ENCODE measurements at regions of chr17 and their contacts with region 1.

Region 1: GRCh38 chr17:21275579-21276263 is 8.8 kb upstream of the MAP2K3 start:
- DNase-seq: peak; percentile 95
- ATAC-seq: peak; percentile 93
- H3K4me3 Mint-ChIP-seq: peak overlapping the region; percentile 67
- H3K27ac Mint-ChIP-seq: peak overlapping the region; percentile 65
- H3K4me1 Mint-ChIP-seq: peaks cover 35% of the 10 kb centered on the region
- H3K27me3 Mint-ChIP-seq: no peaks in the 10 kb centered on the region

Region 2: DNA sequence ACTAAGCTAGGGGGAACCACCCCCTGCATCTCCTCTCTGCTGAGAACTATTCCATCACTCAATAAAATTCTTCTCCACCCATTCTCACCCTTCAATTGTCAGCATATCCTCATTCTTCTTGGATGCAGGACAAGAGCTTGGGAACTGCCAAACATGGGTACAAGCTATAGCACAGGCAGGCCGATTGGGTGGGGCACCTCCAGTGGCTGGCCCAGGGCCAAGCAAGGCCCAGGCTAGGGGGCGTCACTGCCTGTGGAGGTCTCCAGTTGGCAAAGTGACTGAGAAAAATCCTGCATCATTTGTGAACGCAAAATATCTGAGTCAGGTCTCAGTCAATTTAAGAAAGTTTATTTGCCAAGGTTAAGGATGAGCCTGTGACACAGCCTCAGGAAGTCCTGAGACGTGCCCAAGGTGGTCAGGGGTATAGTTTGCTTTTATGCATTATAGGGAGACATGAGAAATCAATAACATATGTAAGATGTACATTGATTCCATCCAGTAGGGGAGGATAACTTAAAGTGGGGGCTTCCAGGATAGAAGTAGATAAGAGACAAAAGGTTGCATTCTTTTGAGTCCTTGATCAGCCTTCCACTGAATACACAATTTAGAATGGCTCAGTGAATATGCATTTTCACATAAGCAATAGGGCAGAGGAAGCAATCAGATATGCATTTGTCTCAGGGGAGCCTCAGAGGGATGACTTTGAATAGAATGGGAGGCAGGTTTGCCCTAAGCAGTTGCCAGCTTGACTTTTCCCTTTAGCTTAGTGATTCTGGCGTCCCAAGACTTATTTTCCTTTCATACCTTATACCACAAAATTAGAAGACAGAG is 170.4 kb before region 1 on chr17:
- CTCF ChIA-PET with region 1: no interaction called
- DNase-seq: no peak
- ATAC-seq: no peak
- H3K4me3 Mint-ChIP-seq: no peak overlapping the region
- H3K27ac Mint-ChIP-seq: no peak overlapping the region
- H3K4me1 Mint-ChIP-seq: no peaks in the 10 kb centered on the region
- H3K27me3 Mint-ChIP-seq: peaks cover 12% of the 10 kb centered on the region

Region 3: DNA sequence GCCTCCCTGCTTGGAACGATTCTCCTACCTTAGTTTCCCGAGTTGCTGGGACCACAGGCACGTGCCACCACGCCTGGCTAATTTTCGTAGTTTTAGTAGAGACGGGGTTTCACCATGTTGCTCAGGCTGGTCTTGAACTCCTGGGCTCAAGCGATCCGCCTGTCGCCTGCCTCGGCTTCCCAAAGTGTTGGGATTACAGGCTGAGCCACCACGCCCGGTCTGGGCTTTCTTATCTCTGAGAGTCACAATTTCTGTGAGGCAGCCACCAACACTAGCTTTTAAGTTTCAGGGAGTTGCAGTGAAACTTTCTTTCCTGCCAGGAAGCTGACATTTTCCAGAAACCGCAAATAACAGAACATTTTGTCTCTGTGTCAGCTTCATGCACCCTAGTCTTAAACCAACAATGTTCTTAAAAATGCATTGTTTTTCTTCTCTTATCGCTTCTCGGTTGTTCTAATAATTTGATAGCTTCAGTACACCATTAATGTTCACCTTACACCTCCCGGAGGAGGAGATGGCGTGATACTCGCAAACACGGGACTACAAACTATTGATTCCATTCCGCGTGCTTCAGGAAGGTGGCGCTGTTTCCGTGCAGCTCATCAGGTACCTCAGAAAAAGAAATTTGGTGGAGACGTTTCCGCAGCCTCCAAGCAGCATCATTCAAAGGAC is 156.3 kb before region 1 on chr17:
- CTCF ChIA-PET with region 1: interaction called, 18 read pairs
- DNase-seq: peak; percentile 77
- ATAC-seq: peak; percentile 88
- H3K4me3 Mint-ChIP-seq: peak overlapping the region; percentile 3
- H3K27ac Mint-ChIP-seq: no peak overlapping the region
- H3K4me1 Mint-ChIP-seq: peaks cover 8% of the 10 kb centered on the region
- H3K27me3 Mint-ChIP-seq: peaks cover 10% of the 10 kb centered on the region

Region 4: DNA sequence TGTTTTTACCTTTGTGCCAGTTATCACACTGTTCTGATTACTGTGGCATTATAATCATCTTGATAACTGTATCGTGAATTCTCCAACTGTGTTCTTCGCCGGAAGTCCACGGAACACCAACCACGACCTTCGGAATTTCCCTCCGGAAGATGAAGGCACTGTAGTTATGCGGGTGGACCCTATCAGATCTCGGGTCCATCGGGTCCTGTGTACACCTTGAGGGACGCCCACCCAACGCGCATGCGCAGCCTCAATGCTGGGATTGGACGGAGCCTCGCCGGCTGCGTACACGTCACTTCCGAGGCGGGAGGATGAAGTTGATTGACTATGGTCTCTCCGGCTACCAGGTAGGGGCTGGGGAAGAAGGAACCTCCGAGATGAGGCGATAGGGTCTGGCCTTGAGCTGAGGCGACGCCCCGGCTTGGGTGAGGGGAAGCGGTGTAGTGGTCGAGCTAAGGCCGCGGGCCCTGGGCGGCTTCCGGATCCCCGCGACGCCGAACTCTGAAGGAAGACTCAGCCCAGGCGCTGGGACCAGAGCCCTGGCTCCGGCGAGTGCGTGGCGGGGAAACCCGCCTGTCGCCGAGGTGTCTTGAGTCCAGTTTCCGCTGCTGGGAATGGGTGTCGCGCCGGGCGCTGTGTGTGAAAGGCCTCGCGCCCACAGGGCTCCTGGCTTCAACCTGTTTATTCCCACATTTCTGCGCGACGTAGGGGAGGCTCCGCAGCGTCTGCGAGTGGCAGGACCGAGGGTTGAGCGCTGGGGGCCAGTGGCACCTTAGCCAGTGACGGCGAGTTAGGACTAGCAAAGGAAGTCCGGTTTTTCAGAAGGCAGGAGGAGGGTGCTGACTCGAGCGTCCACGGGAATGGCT is 148.8 kb before region 1 on chr17 and contains the start of gene DHRS7B:
- CTCF ChIA-PET with region 1: interaction called, 10 read pairs
- DNase-seq: peak; percentile 97
- ATAC-seq: peak; percentile 95
- H3K4me3 Mint-ChIP-seq: peak within 1 kb of the TSS; percentile 98
- H3K27ac Mint-ChIP-seq: peak within 1 kb of the TSS; percentile 95
- H3K4me1 Mint-ChIP-seq: peaks cover 29% of the 10 kb centered on the region
- H3K27me3 Mint-ChIP-seq: peaks cover under 1% of the 10 kb centered on the region
- total RNA-seq, gene DHRS7B: 18.8 to 19.0 TPM

Region 5: GRCh38 chr17:21214015-21214776 is 61.5 kb before region 1 on chr17 and contains the start of gene TMEM11:
- CTCF ChIA-PET with region 1: interaction called, 10 read pairs
- DNase-seq: peak; percentile 97
- ATAC-seq: peak; percentile 93
- H3K4me3 Mint-ChIP-seq: peak within 1 kb of the TSS; percentile 88
- H3K27ac Mint-ChIP-seq: peak within 1 kb of the TSS; percentile 92
- H3K4me1 Mint-ChIP-seq: peaks cover 57% of the 10 kb centered on the region
- H3K27me3 Mint-ChIP-seq: no peaks in the 10 kb centered on the region
- total RNA-seq, gene TMEM11: 24.8 to 29.3 TPM

Region 6: DNA sequence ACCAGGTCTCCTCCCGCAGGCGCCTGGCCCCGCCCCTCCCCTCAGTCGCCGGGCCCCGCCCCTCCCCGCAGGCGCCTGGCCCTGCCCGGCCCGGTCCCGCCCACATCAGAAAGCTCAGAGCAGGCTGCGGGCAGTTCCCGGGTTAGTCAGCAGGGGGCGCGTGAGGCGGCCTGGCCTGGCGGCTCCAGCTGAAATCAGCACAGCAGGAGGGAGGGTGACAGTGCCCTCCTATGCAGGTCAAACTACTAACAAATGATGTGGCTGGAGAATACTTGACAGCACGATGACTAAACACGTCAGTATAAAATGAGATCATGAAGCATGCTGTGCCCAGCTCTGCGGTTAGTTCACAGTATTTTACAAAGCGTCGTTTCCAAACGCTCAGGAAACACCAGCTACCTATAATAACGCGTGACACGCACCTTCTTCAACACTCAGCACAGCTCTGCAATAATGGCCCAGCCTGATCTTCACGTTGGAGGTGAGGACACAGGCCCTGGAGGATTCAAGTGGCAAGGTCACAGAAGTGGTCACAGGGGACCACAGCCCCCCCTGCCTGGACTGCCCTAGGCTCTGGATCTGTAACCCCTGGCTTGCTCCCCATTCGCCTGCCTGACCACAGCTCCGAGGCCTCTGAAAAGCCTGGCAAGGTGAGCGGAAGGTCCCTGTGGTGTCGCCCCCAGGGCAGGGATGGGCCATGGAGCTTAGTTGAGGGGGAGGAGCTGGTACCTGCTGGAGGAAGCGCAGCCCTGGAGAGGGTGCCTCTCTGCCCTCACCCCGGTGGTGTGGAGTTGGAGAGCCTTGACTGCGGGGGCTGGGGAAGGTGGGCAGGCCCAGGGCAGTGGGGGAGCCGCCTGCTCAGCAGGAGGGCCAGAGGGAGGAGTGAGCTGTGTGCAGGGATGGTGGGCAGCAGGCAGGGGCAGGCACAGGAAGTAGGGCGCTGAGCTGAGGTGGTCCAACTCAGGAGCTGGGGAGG is 181.6 kb after region 1 on chr17:
- CTCF ChIA-PET with region 1: interaction called, 17 read pairs
- DNase-seq: peak; percentile 92
- ATAC-seq: peak; percentile 95
- H3K4me3 Mint-ChIP-seq: no peak overlapping the region
- H3K27ac Mint-ChIP-seq: no peak overlapping the region
- H3K4me1 Mint-ChIP-seq: peaks cover 18% of the 10 kb centered on the region
- H3K27me3 Mint-ChIP-seq: peaks cover 17% of the 10 kb centered on the region

Measured in activated CD8-positive, alpha-beta memory T cell treated with anti-CD3 and anti-CD28 coated beads, Interleukin-2, amount 10 ng/mL, durations not matched to agents 7 days and 5 days (primary cell).